ENCODE measurements at regions of chr18 and their contacts with region 1.

Region 1: GRCh38 chr18:22494771-22495170 is 77.1 kb upstream of the CTAGE1 start:
- DNase-seq: no peak
- ATAC-seq: no peak
- H3K4me3 ChIP-seq: no peak overlapping the region
- H3K27ac ChIP-seq: no peak overlapping the region
- H3K4me1 ChIP-seq: no peaks in the 10 kb centered on the region
- H3K27me3 ChIP-seq: no peaks in the 10 kb centered on the region
- CTCF ChIP-seq: no peak
- POLR2A ChIP-seq: no peak
- RAD21 ChIP-seq: no peak

Region 2: GRCh38 chr18:22441638-22442037 is 53.1 kb before region 1 on chr18:
- CTCF ChIA-PET with region 1: no interaction called
- POLR2A ChIA-PET with region 1: no interaction called
- RAD21 ChIA-PET with region 1: no interaction called
- intact Hi-C with region 1: loop called (anchors 5 kb)
- DNase-seq: no peak
- ATAC-seq: no peak
- H3K4me3 ChIP-seq: no peak overlapping the region
- H3K27ac ChIP-seq: no peak overlapping the region
- H3K4me1 ChIP-seq: no peaks in the 10 kb centered on the region
- H3K27me3 ChIP-seq: no peaks in the 10 kb centered on the region
- CTCF ChIP-seq: peak in 1 of 3 experiments; percentile 33; a peak in 1 of 6 replicates
- POLR2A ChIP-seq: no peak
- RAD21 ChIP-seq: no peak

Region 3: GRCh38 chr18:22831441-22831904 is 336.7 kb after region 1 on chr18:
- CTCF ChIA-PET with region 1: no interaction called
- POLR2A ChIA-PET with region 1: no interaction called
- RAD21 ChIA-PET with region 1: no interaction called
- intact Hi-C with region 1: no loop called
- DNase-seq: peak; percentile 32
- ATAC-seq: peak; percentile 69
- H3K4me3 ChIP-seq: no peak overlapping the region
- H3K27ac ChIP-seq: peak overlapping the region; percentile 9; the same call in 1 of the 2 replicates
- H3K4me1 ChIP-seq: peaks cover 24 to 41% of the 10 kb centered on the region in 2 experiments
- H3K27me3 ChIP-seq: no peaks in the 10 kb centered on the region
- CTCF ChIP-seq: no peak
- POLR2A ChIP-seq: no peak
- RAD21 ChIP-seq: no peak